OCI-LY7 (cell line): ENCODE measurements at regions of chr9 and their contacts with region 1.

Region 1: GRCh38 chr9:35116898-35117551 is 1.4 kb upstream of the ATOSB start:
- DNase-seq: peak; percentile 92
- H3K4me3 ChIP-seq: peak overlapping the region; percentile 74
- H3K27ac ChIP-seq: peak overlapping the region; percentile 73
- H3K4me1 ChIP-seq: peaks cover 31% of the 10 kb centered on the region
- CTCF ChIP-seq: peak; percentile 90

Region 2: DNA sequence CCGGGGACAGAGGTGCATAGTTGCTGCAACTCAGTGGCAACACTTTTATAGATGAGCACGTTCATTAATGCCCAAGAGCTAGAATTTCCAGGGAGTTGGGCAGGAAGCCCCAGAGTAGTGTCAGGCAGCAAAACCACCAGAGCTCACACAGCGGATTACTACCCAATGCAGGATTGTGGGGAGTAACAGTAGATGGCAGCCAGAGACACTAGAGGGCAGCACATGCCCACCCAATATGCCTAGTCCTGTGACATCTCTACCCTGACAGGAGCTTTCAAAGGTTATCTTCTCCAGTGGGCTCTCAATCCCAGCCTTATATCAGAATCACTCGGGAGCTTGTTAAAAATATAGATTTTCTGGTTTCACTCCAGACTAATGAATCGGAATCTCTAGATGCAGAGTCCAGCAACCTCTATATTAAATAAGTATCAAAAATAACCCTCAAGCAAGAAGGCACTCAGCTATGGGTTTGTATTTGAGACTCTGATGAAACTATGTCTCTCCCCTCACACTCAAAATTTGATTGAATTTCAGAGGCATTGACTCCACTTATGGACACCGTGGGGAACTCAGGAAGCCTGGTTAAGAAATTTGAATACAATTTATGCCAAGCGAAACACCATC is 217.4 kb before region 1 on chr9:
- CTCF ChIA-PET with region 1: no interaction called
- POLR2A ChIA-PET with region 1: interaction called, 3 read pairs
- intact Hi-C with region 1: loop called (anchors 1 kb)
- DNase-seq: peak; percentile 77
- H3K4me3 ChIP-seq: no peak overlapping the region
- H3K27ac ChIP-seq: no peak overlapping the region
- H3K4me1 ChIP-seq: no peaks in the 10 kb centered on the region
- CTCF ChIP-seq: peak; percentile 86

Region 3: GRCh38 chr9:34989003-34989945 is 127.8 kb before region 1 on chr9 and contains the start of gene DNAJB5:
- CTCF ChIA-PET with region 1: no interaction called
- POLR2A ChIA-PET with region 1: no interaction called
- intact Hi-C with region 1: loop called (anchors 5 kb)
- DNase-seq: peak; percentile 98
- H3K4me3 ChIP-seq: peak within 1 kb of the TSS; percentile 79
- H3K27ac ChIP-seq: peak within 1 kb of the TSS; percentile 13
- H3K4me1 ChIP-seq: peaks cover 58% of the 10 kb centered on the region
- CTCF ChIP-seq: no peak
- total RNA-seq, gene DNAJB5: 4.6 and 5.1 TPM in 2 replicates

Region 4: DNA sequence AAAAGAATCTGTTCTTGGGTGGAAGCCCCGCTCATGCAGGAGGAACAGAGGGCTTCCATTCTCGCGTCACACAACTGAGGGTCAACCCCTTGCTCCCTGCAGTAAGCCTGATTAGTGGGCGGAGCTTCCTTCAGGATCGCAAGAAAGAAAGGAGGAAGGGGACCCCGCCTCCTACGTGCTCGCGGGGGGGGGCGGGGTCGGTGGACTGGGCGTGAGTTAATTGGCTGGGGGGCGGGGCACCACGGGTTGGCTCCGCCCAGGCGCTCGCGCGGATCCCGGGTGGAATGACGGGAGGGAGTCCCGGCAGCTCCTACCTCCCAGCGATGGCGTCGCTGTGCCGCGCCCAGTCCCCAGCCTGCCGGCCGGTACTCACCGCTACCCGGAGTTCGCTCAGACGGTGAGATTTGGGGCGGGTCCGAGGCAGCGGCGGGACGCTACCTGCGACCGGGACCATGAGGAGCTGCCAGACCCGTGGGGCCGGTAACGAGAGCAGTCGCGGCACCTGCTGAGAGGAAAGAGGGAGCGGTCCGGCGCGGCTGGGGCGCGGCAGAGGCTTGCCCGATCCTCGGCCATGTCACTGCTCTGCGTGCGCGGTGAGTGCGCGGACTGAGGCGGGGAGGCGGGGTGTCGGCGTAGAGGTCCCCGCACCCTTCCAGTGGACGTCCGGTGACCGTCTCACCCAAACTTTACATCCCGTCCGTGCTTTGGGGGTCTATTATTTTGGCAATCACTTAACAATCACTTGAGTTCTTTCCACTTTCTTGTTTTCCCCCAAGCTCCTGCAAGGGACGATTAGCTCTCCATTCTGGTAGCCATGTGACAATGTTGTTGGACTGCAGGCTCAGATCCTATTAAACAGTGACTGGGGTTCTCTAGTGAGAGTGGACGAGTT is 44.9 kb after region 1 on chr9 and contains the start of gene UNC13B:
- CTCF ChIA-PET with region 1: interaction called, 3 read pairs
- POLR2A ChIA-PET with region 1: no interaction called
- intact Hi-C with region 1: loop called (anchors 1 kb)
- DNase-seq: peak; percentile 93
- H3K4me3 ChIP-seq: peak within 1 kb of the TSS; percentile 79
- H3K27ac ChIP-seq: no peak within 1 kb of the TSS
- H3K4me1 ChIP-seq: peaks cover 34% of the 10 kb centered on the region
- CTCF ChIP-seq: no peak
- total RNA-seq, gene UNC13B: 1.7 and 4.8 TPM in 2 replicates

Region 5: DNA sequence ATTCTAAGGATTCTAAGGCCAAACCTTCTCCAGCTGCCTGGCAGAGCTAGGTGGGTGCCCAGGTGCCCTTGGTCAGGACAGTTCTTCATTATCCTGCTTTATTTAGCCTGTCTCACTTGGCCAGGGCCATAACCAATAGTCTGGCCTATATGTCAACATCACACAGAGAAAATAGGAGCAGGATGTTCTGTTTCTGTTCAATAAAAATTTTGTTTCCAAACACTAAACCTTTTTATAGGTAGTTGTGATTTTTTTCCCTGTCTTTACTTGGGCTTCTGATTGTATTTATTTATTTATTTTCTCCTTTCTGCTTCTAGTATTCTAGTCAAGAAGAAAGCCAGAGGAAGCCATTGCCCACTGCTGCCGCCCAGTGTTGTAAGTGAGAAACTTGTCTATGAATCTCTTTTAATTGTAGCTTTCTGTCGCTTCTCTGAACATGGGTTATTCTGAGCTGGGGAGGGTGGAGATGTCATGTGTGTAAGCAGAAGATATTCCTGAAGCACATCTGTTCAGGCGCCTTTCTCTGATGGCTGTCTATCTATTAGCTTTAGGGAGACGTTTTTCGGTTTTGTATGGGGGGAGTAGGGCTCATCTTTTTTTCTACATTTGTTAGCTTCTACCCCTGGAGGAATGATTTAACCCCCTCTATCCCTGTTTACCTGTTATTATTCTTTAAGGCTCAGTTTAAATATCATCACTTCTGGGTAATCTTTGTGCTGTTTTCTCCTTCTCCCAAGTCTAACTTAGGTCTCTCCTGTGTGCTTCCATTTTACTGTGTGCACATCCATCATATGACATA is 141.8 kb after region 1 on chr9:
- CTCF ChIA-PET with region 1: no interaction called
- POLR2A ChIA-PET with region 1: interaction called, 6 read pairs
- intact Hi-C with region 1: loop called (anchors 1 kb)
- DNase-seq: peak; percentile 63
- H3K4me3 ChIP-seq: no peak overlapping the region
- H3K27ac ChIP-seq: no peak overlapping the region
- H3K4me1 ChIP-seq: no peaks in the 10 kb centered on the region
- CTCF ChIP-seq: peak; percentile 87

Region 6: GRCh38 chr9:35287986-35288632 is 171.1 kb after region 1 on chr9:
- CTCF ChIA-PET with region 1: no interaction called
- POLR2A ChIA-PET with region 1: no interaction called
- intact Hi-C with region 1: no loop called
- DNase-seq: no peak
- H3K4me3 ChIP-seq: no peak overlapping the region
- H3K27ac ChIP-seq: no peak overlapping the region
- H3K4me1 ChIP-seq: no peaks in the 10 kb centered on the region
- CTCF ChIP-seq: no peak

Region 7: DNA sequence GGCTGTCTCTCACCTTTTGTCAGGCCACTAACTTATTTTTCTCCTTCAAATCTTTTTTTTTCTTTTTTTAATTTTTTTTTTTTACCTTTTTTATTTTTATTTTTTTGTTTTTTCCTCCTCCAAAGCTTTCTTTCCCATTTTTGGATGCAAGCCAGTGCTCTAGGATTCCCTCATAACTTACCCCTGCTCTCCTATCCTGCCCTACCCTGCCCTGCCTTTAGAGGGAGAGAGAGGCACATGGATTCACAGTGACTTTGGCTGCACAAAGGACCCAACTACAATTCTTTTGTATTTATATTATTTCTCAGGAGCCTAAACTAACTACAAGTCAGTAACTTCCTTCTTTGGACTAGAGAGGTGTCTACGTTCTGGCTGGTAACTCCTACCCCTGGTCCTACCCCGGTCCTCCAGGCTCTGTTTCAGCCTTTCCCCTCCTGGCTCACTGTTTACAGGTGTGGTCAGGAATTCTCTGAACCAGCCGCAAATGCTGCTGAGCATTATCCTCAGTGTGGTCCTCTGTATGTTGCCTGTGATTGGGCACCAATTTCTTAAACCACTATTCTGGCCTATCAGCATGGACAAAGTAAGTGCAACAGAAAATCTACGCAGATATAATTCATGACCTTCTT is 364.4 kb after region 1 on chr9:
- CTCF ChIA-PET with region 1: interaction called, 4 read pairs
- POLR2A ChIA-PET with region 1: no interaction called
- intact Hi-C with region 1: loop called (anchors 1 kb)
- DNase-seq: peak; percentile 24
- H3K4me3 ChIP-seq: no peak overlapping the region
- H3K27ac ChIP-seq: no peak overlapping the region
- H3K4me1 ChIP-seq: no peaks in the 10 kb centered on the region
- CTCF ChIP-seq: peak; percentile 74

Region 8: GRCh38 chr9:35553670-35554543 is 436.9 kb after region 1 on chr9:
- CTCF ChIA-PET with region 1: interaction called, 8 read pairs
- POLR2A ChIA-PET with region 1: no interaction called
- intact Hi-C with region 1: loop called (anchors 2 kb)
- DNase-seq: peak; percentile 67
- H3K4me3 ChIP-seq: no peak overlapping the region
- H3K27ac ChIP-seq: no peak overlapping the region
- H3K4me1 ChIP-seq: peaks cover 3% of the 10 kb centered on the region
- CTCF ChIP-seq: peak; percentile 92